PC-3 (cell line): ENCODE measurements at regions of chr10 and their contacts with region 1.

Region 1: DNA sequence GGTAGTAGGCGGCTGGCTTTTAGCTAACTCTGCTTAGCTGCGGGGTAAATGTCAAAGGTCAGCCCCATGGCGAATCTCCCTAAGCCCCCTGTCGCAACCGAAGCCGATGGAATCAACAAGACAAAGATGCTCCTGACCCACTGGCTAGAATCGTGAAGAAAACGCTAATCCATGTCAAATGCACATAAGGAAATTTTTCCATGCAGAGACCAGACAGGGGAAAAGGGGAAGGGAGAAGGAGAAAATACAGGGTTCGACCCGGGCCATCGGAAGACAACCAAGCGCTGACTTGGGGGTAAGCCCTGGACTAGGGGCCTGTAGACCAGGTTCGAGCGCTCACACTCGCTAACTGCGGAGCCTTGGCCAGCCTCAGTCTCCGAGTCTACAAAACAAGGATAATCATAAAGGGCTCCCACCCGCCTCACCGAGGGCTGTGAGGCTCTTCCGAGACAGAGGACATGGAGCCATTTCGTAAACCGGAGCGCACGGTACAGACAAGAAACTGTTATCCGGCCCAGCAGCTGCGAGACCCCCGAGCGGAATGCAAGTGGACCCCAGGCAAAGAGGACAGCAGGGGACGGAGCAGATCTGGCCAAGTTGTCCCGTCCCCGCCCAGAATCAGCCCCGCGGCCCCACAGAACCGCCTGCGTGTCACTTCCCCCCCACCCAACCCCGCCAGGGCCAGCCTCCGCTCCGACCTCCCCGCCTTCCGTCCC is 507 bp downstream of the SAR1A start:
- DNase-seq: no peak
- ATAC-seq: peak; percentile 21
- H3K4me3 ChIP-seq: peak overlapping the region; percentile 81
- H3K27ac ChIP-seq: peak overlapping the region; percentile 19
- H3K4me1 ChIP-seq: peaks cover 30% of the 10 kb centered on the region
- H3K27me3 ChIP-seq: no peaks in the 10 kb centered on the region
- CTCF ChIP-seq: no peak

Region 2: DNA sequence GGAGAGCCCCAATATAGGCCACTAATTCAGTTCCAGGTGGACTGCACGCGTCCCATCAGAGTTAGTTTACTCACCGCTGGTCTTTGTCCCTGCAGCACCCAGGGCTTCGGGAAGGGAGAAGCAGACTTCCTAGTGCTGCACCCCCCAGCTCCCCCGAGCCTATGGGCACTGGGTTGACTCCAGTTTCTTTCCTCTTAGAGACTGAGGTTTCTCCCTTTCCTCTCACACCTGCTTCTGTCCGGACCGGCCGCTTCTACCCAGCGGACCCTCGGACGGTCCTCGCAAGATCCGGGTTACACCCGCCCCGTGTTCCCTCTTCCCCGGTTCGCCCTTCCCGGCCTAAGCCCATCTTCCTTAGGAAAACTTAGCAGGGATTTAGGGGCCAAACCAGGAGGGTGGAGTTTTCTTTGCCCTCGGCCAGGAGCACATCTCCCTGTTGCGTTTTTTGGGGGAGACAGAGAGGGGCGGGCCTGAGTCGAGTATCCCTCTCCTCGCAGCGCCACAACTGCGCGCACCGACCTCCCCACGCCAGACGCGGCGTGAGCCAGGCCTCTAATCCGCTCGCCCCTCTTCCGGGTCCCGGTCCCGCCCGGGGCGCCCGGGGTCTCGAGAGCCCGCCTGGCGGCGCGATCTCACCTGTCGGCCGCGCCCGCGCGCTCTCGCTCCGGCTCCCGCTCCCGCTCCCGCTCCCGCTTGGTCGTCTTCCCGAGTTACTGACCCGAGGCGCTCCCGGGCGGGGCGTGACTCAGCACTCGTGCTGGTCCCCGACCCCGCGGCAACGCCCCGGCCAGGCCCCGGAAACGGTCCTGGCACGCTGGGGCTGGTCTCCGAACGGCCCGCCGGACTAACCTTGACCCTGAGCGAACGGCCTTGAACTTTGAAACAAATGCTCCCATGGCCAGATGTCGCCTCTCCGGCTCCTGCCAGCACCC is 37.4 kb before region 1 on chr10 and contains the start of gene AIFM2:
- CTCF ChIA-PET with region 1: no interaction called
- POLR2A ChIA-PET with region 1: interaction called, 11 read pairs
- intact Hi-C with region 1: no loop called
- DNase-seq: peak; percentile 97
- ATAC-seq: peak; percentile 80
- H3K4me3 ChIP-seq: peak within 1 kb of the TSS; percentile 70
- H3K27ac ChIP-seq: peak within 1 kb of the TSS; percentile 53
- H3K4me1 ChIP-seq: peaks cover 31% of the 10 kb centered on the region
- H3K27me3 ChIP-seq: no peaks in the 10 kb centered on the region
- CTCF ChIP-seq: no peak; the same call in 1 of the 2 replicates
- total RNA-seq, gene AIFM2: 29.2 and 39.0 TPM in 2 replicates

Region 3: GRCh38 chr10:70197235-70197945 is 27.6 kb after region 1 on chr10:
- CTCF ChIA-PET with region 1: no interaction called
- POLR2A ChIA-PET with region 1: interaction called, 3 read pairs
- intact Hi-C with region 1: loop called (anchors 5 kb)
- DNase-seq: no peak
- ATAC-seq: no peak
- H3K4me3 ChIP-seq: no peak overlapping the region
- H3K27ac ChIP-seq: no peak overlapping the region
- H3K4me1 ChIP-seq: peaks cover 8% of the 10 kb centered on the region
- H3K27me3 ChIP-seq: no peaks in the 10 kb centered on the region
- CTCF ChIP-seq: no peak

Region 4: GRCh38 chr10:70233109-70233938 is 63.5 kb after region 1 on chr10 and contains the start of gene PPA1:
- CTCF ChIA-PET with region 1: no interaction called
- POLR2A ChIA-PET with region 1: interaction called, 28 read pairs
- intact Hi-C with region 1: loop called (anchors 1 kb)
- DNase-seq: peak; percentile 100
- ATAC-seq: peak; percentile 87
- H3K4me3 ChIP-seq: peak within 1 kb of the TSS; percentile 91
- H3K27ac ChIP-seq: peak within 1 kb of the TSS; percentile 75
- H3K4me1 ChIP-seq: peaks cover 29% of the 10 kb centered on the region
- H3K27me3 ChIP-seq: no peaks in the 10 kb centered on the region
- CTCF ChIP-seq: peak; percentile 71
- total RNA-seq, gene PPA1: 392 and 440 TPM in 2 replicates

Region 5: DNA sequence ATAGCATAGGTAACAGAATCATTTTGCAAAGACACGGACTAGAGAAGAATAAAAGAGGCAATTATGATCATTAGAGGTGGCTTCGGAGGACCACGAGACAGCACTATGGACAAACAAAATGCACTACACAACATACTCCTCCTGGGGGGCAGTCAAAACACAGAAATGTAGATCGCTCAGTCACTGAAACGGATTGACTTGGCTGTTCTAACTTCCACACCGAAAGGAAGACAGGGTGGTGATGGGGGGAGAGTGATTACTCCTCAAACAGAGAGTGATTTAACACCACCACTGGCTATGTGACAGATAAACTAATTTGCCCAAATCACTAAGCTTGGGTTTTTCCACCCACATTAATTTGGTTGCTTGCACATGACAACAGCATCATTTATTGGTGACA is 77.6 kb after region 1 on chr10:
- CTCF ChIA-PET with region 1: no interaction called
- POLR2A ChIA-PET with region 1: no interaction called
- intact Hi-C with region 1: no loop called
- DNase-seq: no peak
- ATAC-seq: no peak
- H3K4me3 ChIP-seq: no peak overlapping the region
- H3K27ac ChIP-seq: no peak overlapping the region
- H3K4me1 ChIP-seq: no peaks in the 10 kb centered on the region
- H3K27me3 ChIP-seq: peaks cover 25% of the 10 kb centered on the region; the same call in 1 of the 2 replicates
- CTCF ChIP-seq: no peak

Region 6: GRCh38 chr10:70887804-70888800 is 718.3 kb after region 1 on chr10 and contains the start of gene PCBD1:
- CTCF ChIA-PET with region 1: no interaction called
- POLR2A ChIA-PET with region 1: interaction called, 10 read pairs
- intact Hi-C with region 1: no loop called
- DNase-seq: peak; percentile 92
- ATAC-seq: peak; percentile 91
- H3K4me3 ChIP-seq: peak within 1 kb of the TSS; percentile 86
- H3K27ac ChIP-seq: peak within 1 kb of the TSS; percentile 47
- H3K4me1 ChIP-seq: peaks cover 31% of the 10 kb centered on the region
- H3K27me3 ChIP-seq: no peaks in the 10 kb centered on the region
- CTCF ChIP-seq: 0 out of 2 replicates have a peak, but pooled peaks have one; percentile 9
- total RNA-seq, gene PCBD1: 277 and 283 TPM in 2 replicates